Activated T-helper 1 cell treated with anti-CD3 and anti-CD28 coated beads, Interleukin-12 subunit alpha, Interleukin-12 subunit beta, Interleukin-2, Interleukin-4 antibody, amounts not matched to agents 30 ng/mL and 10 ng/mL and 1 ng/mL, durations not matched to agents 14 hours and 24 hours and 36 hours (primary cell): ENCODE measurements at regions of chr12 and their contacts with region 1.

Region 1: GRCh38 chr12:56117778-56118687 is at the start of gene ZC3H10:
- DNase-seq: peak; percentile 98
- H3K4me3 Mint-ChIP-seq: peak within 1 kb of the TSS; percentile 91
- H3K27ac Mint-ChIP-seq: peak within 1 kb of the TSS; percentile 99
- H3K4me1 Mint-ChIP-seq: peaks cover 31% of the 10 kb centered on the region
- H3K27me3 Mint-ChIP-seq: no peaks in the 10 kb centered on the region
- total RNA-seq, gene ZC3H10: 13.5 and 13.7 TPM in 2 replicates

Region 2: GRCh38 chr12:55973598-55974307 is 144.3 kb before region 1 on chr12 and contains the start of gene RAB5B:
- intact Hi-C with region 1: loop called (anchors 1 kb)
- DNase-seq: peak; percentile 98
- H3K4me3 Mint-ChIP-seq: no peak within 1 kb of the TSS
- H3K27ac Mint-ChIP-seq: no peak within 1 kb of the TSS
- H3K4me1 Mint-ChIP-seq: peaks cover 20% of the 10 kb centered on the region
- H3K27me3 Mint-ChIP-seq: no peaks in the 10 kb centered on the region
- total RNA-seq, gene RAB5B: 42.6 and 47.0 TPM in 2 replicates

Region 3: GRCh38 chr12:56152318-56153033 is 34.4 kb after region 1 on chr12 and contains the start of gene MYL6B:
- intact Hi-C with region 1: loop called (anchors 1 kb)
- DNase-seq: peak; percentile 92
- H3K4me3 Mint-ChIP-seq: peak within 1 kb of the TSS; percentile 88
- H3K27ac Mint-ChIP-seq: peak within 1 kb of the TSS; percentile 99
- H3K4me1 Mint-ChIP-seq: peaks cover 39% of the 10 kb centered on the region
- H3K27me3 Mint-ChIP-seq: no peaks in the 10 kb centered on the region
- total RNA-seq, gene MYL6B: 58.8 and 67.6 TPM in 2 replicates

Region 4: GRCh38 chr12:56266693-56267442 is 148.8 kb after region 1 on chr12 and contains the start of gene COQ10A:
- intact Hi-C with region 1: loop called (anchors 2 kb)
- DNase-seq: peak; percentile 84
- H3K4me3 Mint-ChIP-seq: peak within 1 kb of the TSS; percentile 96
- H3K27ac Mint-ChIP-seq: peak within 1 kb of the TSS; percentile 87
- H3K4me1 Mint-ChIP-seq: peaks cover 15% of the 10 kb centered on the region
- H3K27me3 Mint-ChIP-seq: no peaks in the 10 kb centered on the region
- total RNA-seq, gene COQ10A: 17.8 and 18.0 TPM in 2 replicates

Region 5: GRCh38 chr12:56326533-56326932 is 208.5 kb after region 1 on chr12:
- intact Hi-C with region 1: no loop called
- DNase-seq: no peak
- H3K4me3 Mint-ChIP-seq: no peak overlapping the region
- H3K27ac Mint-ChIP-seq: no peak overlapping the region
- H3K4me1 Mint-ChIP-seq: no peaks in the 10 kb centered on the region
- H3K27me3 Mint-ChIP-seq: no peaks in the 10 kb centered on the region

Region 6: GRCh38 chr12:56448860-56449621 is 331.0 kb after region 1 on chr12 and contains the start of gene TIMELESS:
- intact Hi-C with region 1: loop called (anchors 2 kb)
- DNase-seq: peak; percentile 87
- H3K4me3 Mint-ChIP-seq: peak within 1 kb of the TSS; percentile 92
- H3K27ac Mint-ChIP-seq: peak within 1 kb of the TSS; percentile 85
- H3K4me1 Mint-ChIP-seq: peaks cover 27% of the 10 kb centered on the region
- H3K27me3 Mint-ChIP-seq: no peaks in the 10 kb centered on the region
- total RNA-seq, gene TIMELESS: 44.9 and 45.8 TPM in 2 replicates

Region 7: DNA sequence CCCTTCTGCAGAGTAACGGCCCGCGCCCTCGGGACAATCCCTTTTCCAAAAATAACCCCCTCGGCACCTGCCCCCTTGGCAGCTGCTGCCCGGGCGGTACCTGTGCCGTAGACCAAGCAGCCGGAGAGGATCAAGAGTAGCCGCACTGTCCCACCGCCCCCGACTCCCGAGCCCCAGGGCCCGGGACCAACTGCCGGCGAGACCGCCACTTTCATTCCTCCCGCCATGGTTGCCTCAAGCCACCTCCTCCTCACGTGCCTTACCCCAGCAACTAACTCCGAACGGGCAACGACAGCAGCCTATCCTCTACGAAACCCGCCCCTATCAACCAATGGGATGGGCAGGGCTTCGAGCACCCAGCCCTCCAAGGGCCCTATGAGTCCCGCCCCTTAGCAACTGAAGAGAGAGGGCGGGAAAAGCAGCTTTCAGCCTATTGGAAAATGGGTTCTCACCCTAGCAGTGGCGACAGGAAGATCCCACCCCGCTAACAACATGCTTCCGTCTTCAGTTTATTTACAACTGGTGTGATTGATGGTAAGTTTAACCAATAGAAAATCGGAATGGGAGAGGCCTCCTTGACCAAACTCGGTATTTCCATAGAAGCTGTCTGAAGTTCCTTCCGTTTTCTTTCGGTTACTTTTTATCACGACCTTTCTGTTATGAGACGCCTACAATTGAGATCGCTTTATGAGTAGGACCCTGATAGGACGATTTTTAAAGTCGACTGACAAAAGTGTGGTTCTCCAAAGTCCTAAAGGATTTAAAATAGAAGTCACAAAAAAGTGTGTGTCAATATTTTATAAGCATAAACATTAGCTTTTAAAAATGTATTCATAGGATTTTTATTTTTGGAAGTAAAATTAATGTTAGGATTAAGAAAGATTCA is 960.7 kb after region 1 on chr12 and contains the start of gene NEMP1:
- intact Hi-C with region 1: loop called (anchors 5 kb)
- DNase-seq: peak; percentile 97
- H3K4me3 Mint-ChIP-seq: peak within 1 kb of the TSS; percentile 89
- H3K27ac Mint-ChIP-seq: peak within 1 kb of the TSS; percentile 92
- H3K4me1 Mint-ChIP-seq: peaks cover 16% of the 10 kb centered on the region
- H3K27me3 Mint-ChIP-seq: no peaks in the 10 kb centered on the region
- total RNA-seq, gene NEMP1: 70.2 and 71.7 TPM in 2 replicates